Endothelial cell of umbilical vein (primary cell): ENCODE measurements at regions of chr1 and their contacts with region 1.

Region 1: GRCh38 chr1:80966266-80966665 is 834.5 kb upstream of the ADGRL2 start:
- DNase-seq: no peak
- H3K4me3 ChIP-seq: no peak overlapping the region
- H3K27ac ChIP-seq: no peak overlapping the region
- H3K4me1 ChIP-seq: no peaks in the 10 kb centered on the region
- H3K27me3 ChIP-seq: no peaks in the 10 kb centered on the region
- CTCF ChIP-seq: no peak
- POLR2A ChIP-seq: no peak

Region 2: DNA sequence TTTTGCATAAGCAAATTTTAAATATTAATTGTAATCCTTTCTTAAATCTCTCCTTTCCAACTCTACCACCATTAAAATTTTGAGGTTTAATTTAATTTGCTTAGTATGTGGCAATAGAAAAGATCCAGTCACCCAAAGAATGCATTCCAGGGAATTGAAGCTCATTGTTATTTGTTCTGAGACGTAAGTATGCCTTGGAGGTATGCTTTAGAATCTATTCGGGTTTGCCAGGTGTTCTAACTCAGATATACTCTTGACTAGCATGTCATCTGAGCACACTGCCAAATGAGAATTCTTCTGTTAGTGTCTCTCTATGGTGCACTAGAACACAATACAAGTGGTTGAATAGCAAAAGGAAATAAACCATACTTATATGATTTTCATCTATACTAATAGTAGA is 20.8 kb after region 1 on chr1:
- CTCF ChIA-PET with region 1: no interaction called
- POLR2A ChIA-PET with region 1: no interaction called
- dilution Hi-C with region 1: no loop called
- intact Hi-C with region 1: loop called (anchors 1 kb)
- DNase-seq: no peak
- H3K4me3 ChIP-seq: no peak overlapping the region
- H3K27ac ChIP-seq: no peak overlapping the region
- H3K4me1 ChIP-seq: no peaks in the 10 kb centered on the region
- H3K27me3 ChIP-seq: no peaks in the 10 kb centered on the region
- CTCF ChIP-seq: no peak
- POLR2A ChIP-seq: no peak